Spleen (tissue), 13 donors: ENCODE measurements at regions of chr4 and their contacts with region 1.

Region 1: GRCh38 chr4:37603070-37603468 is 83.1 kb downstream of the RELL1 start:
- DNase-seq: peak; percentile 94
- H3K4me3 ChIP-seq: no peak overlapping the region
- H3K27ac ChIP-seq: no peak overlapping the region
- H3K4me1 ChIP-seq: peaks cover 0 to 24% (median 6%) of the 10 kb centered on the region in 6 donors
- H3K27me3 ChIP-seq: no peaks in the 10 kb centered on the region
- CTCF ChIP-seq: peak; percentile 90 to 98 (median 95)
- POLR2A ChIP-seq: no peak

Region 2: DNA sequence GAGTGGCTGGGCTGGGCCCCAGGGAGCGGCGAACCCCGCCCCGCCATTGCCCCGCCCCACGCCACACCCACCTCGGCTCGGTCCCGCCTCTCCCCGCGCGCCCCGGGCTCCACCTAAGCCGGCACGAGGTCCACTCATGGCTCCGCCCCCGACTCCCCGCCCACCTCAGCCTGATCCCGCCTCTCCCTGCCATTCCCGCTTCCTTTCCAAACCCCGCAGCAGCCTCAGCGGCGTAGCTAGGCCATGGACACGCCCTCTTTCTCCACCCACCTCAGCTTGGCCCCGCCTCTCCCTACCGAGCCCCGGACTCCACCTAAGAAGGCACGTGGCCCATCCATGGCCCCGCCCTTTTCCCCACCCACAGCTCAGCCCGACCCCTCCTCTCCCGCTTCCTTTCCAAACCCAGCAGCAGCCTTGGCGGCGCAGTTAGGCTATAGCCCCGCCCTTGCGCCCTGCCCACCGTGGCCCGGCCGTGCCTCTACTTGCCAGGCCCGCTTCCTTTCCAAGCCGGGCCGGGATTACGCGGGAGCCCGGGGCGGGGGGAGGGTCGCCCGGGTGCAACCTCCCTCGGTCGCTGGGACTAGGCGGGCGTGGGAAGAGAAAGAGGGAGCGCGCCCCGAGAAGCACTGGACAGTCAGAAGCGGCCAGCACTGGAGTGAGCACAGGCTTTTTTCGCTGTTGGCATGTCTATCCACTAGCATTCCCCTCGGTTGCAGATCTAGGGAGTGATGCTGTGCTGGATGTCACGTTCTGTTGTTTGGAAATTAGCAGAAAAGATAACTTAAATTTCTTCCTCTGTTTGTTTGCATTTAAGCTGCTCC is 83.5 kb after region 1 on chr4 and contains the start of gene RELL1:
- intact Hi-C with region 1: loop called (anchors 10 kb)
- DNase-seq: peak; percentile 99
- H3K4me3 ChIP-seq: peak within 1 kb of the TSS; percentile 68 to 94 (median 85)
- H3K27ac ChIP-seq: peak within 1 kb of the TSS; percentile 91 to 99 (median 95)
- H3K4me1 ChIP-seq: peaks cover 27 to 54% (median 48%) of the 10 kb centered on the region in 6 donors
- H3K27me3 ChIP-seq: no peaks in the 10 kb centered on the region
- CTCF ChIP-seq: peak in 2 of 11 experiments; percentile 10 to 23
- POLR2A ChIP-seq: no peak
- total RNA-seq, gene RELL1: 30.0 to 70.4 (median 46.9) TPM

Region 3: GRCh38 chr4:37802068-37802666 is 199.1 kb after region 1 on chr4:
- intact Hi-C with region 1: loop called (anchors 5 kb)
- DNase-seq: no peak
- H3K4me3 ChIP-seq: no peak overlapping the region
- H3K27ac ChIP-seq: no peak overlapping the region
- H3K4me1 ChIP-seq: peaks cover 0 to 13% (median 5%) of the 10 kb centered on the region in 6 donors
- H3K27me3 ChIP-seq: no peaks in the 10 kb centered on the region
- CTCF ChIP-seq: peak in 9 of 11 experiments; percentile 16 to 73 (median 52)
- POLR2A ChIP-seq: no peak

Region 4: DNA sequence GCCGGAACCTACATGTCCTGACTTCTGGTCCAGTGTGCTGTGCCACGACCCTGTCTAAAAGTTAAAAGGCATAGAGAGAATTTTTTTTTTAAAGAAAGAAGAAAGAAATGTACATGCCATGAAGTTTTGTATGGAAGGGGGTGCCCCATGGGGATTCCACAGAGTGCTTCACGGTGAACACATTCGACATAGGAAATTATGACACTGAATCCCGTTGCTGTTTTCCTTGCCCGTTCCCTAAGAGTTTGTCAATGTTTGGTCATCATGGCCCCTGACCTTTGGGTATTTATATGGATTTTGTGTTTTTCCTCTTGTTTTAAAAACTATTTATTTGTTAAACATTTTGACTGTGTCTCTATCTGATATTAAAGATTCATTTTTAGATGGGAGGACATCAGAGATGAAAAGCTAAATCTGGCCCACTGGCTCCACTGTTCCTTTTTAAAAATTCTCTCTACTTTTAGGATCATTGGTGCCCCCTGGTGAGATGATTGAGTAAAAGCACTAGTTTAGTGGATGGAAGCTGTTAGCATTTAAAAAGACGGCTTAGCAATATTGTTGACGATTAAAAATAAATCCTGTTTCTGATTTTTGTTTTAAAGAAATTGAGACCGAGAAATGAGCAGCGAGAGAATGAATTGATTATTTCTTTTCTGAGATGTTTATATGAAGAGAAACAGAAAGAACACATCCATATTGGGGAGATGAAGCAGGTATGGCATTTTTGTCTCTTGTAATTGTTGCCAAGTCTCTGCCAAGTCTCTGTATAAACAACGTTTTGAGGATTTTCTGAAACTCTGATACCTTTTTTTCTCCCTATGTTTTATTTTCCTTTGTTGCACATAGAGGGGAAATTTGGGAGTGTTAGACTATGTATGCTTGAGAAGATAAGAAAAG is 432.2 kb after region 1 on chr4:
- intact Hi-C with region 1: loop called (anchors 5 kb)
- DNase-seq: no peak
- H3K4me3 ChIP-seq: no peak overlapping the region
- H3K27ac ChIP-seq: no peak overlapping the region
- H3K4me1 ChIP-seq: no peaks in the 10 kb centered on the region
- H3K27me3 ChIP-seq: no peaks in the 10 kb centered on the region
- CTCF ChIP-seq: peak; percentile 29 to 82 (median 77)
- POLR2A ChIP-seq: no peak